Activated B cell treated with CpG ODN at 0.5 μM for 24 hours (primary cell): ENCODE measurements at regions of chr1 and their contacts with region 1.

Region 1: DNA sequence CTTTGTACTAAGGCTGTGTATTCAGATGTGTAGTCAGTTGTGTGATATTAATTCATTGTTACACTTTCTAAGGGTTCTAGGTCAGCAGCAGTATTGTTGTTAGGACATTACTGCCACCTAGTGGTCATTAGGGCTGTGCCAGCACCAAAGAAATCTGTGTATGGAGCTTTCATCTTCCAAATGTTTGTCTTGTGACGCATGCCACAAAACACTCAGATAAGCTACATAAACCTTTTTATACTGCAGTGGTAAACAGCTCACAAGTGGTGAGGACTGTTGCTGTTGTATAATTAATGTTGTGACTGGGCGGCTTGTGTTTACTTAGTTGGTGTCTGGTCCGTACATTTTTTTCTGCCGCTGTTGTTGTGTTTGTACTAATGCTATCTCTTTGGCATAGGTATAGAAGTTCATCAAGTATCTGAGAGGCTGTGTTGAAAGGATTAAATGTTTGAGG is 51.7 kb downstream of the S1PR1 start:
- DNase-seq: no peak
- ATAC-seq: peak; percentile 62
- H3K4me3 Mint-ChIP-seq: no peak overlapping the region
- H3K27ac Mint-ChIP-seq: no peak overlapping the region
- H3K4me1 Mint-ChIP-seq: peaks cover 50% of the 10 kb centered on the region
- H3K27me3 Mint-ChIP-seq: no peaks in the 10 kb centered on the region
- CTCF ChIP-seq: peak; percentile 97

Region 2: GRCh38 chr1:99808391-99809115 is 1480.0 kb before region 1 on chr1:
- CTCF ChIA-PET with region 1: no interaction called
- POLR2A ChIA-PET with region 1: no interaction called
- intact Hi-C with region 1: loop called (anchors 5 kb)
- DNase-seq: no peak
- ATAC-seq: peak; percentile 71
- H3K4me3 Mint-ChIP-seq: no peak overlapping the region
- H3K27ac Mint-ChIP-seq: no peak overlapping the region
- H3K4me1 Mint-ChIP-seq: peaks cover 4% of the 10 kb centered on the region
- H3K27me3 Mint-ChIP-seq: peaks cover 10% of the 10 kb centered on the region
- CTCF ChIP-seq: peak; percentile 52

Region 3: DNA sequence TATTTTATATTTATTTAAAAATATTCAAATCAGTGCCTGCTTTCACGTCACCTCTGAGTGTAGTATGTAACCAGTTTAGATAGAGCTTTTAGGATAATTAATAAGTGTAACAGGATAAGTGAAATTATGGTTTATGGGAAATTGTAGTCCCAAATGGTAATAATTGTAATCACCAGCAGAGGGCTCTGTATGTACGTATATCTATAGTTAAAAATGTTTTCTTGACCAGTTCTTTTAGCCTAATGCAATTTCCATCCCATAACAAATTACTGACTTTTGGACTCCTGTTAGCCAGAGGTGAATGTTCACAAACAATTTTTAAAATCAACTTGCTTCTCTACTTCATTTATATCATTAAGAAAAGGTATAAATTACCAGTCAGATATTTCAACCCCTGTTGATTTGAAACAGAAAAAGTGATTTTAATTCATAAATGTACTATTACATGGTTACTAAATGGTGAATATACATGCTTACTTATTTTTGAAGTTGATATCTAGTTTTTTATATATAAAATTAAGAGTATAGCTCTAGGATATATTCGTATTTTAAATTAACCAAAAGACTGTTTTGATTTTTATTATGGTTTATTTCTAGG is 367.3 kb before region 1 on chr1:
- CTCF ChIA-PET with region 1: interaction called, 130 read pairs
- POLR2A ChIA-PET with region 1: interaction called, 7 read pairs
- intact Hi-C with region 1: loop called (anchors 1 kb)
- DNase-seq: no peak
- ATAC-seq: no peak
- H3K4me3 Mint-ChIP-seq: no peak overlapping the region
- H3K27ac Mint-ChIP-seq: no peak overlapping the region
- H3K4me1 Mint-ChIP-seq: peaks cover 24% of the 10 kb centered on the region
- H3K27me3 Mint-ChIP-seq: no peaks in the 10 kb centered on the region
- CTCF ChIP-seq: peak; percentile 98

Region 4: GRCh38 chr1:101128211-101128727 is 160.2 kb before region 1 on chr1:
- CTCF ChIA-PET with region 1: interaction called, 112 read pairs
- POLR2A ChIA-PET with region 1: no interaction called
- intact Hi-C with region 1: loop called (anchors 2 kb)
- DNase-seq: no peak
- ATAC-seq: peak; percentile 95
- H3K4me3 Mint-ChIP-seq: peak overlapping the region; percentile 55
- H3K27ac Mint-ChIP-seq: peak overlapping the region; percentile 87
- H3K4me1 Mint-ChIP-seq: peaks cover 62% of the 10 kb centered on the region
- H3K27me3 Mint-ChIP-seq: no peaks in the 10 kb centered on the region
- CTCF ChIP-seq: no peak

Region 5: GRCh38 chr1:101247404-101248287 is 40.9 kb before region 1 on chr1:
- CTCF ChIA-PET with region 1: interaction called, 43 read pairs
- POLR2A ChIA-PET with region 1: interaction called, 28 read pairs
- intact Hi-C with region 1: no loop called
- DNase-seq: no peak
- ATAC-seq: peak; percentile 89
- H3K4me3 Mint-ChIP-seq: peak overlapping the region; percentile 44
- H3K27ac Mint-ChIP-seq: peak overlapping the region; percentile 82
- H3K4me1 Mint-ChIP-seq: peaks cover 82% of the 10 kb centered on the region
- H3K27me3 Mint-ChIP-seq: no peaks in the 10 kb centered on the region
- CTCF ChIP-seq: no peak

Region 6: DNA sequence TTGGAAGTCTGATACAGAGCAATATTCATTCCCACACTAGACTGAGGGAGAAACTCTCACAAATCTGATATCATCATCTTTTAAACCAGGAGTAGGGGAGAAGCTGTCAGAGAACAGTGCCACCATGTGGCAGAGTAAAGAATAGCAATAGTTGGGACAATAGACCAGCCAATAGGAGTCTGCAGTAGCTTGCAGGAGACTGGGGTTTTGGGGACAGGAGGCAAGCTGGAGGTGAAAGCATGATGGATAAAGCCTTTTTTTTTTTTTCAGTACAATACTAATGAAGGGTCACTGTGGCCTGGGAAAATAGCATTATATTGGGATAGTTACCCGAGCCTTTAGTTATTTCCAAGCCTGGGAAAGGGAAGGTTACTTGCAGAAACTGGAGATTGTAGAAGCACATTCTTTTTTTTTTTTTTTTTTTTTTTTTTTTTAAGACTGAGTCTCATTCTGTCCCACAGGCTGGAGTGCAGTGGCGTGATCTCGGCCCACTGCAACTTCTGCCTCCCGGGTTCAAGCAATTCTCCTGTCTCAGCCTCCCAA is 69.0 kb after region 1 on chr1:
- CTCF ChIA-PET with region 1: interaction called, 22 read pairs
- POLR2A ChIA-PET with region 1: interaction called, 6 read pairs
- intact Hi-C with region 1: loop called (anchors 1 kb)
- DNase-seq: no peak
- ATAC-seq: peak; percentile 99
- H3K4me3 Mint-ChIP-seq: no peak overlapping the region
- H3K27ac Mint-ChIP-seq: no peak overlapping the region
- H3K4me1 Mint-ChIP-seq: peaks cover 9% of the 10 kb centered on the region
- H3K27me3 Mint-ChIP-seq: no peaks in the 10 kb centered on the region
- CTCF ChIP-seq: no peak

Region 7: GRCh38 chr1:101520302-101520701 is 231.8 kb after region 1 on chr1:
- CTCF ChIA-PET with region 1: no interaction called
- POLR2A ChIA-PET with region 1: no interaction called
- intact Hi-C with region 1: no loop called
- DNase-seq: no peak
- ATAC-seq: no peak
- H3K4me3 Mint-ChIP-seq: no peak overlapping the region
- H3K27ac Mint-ChIP-seq: no peak overlapping the region
- H3K4me1 Mint-ChIP-seq: peaks cover 6% of the 10 kb centered on the region
- H3K27me3 Mint-ChIP-seq: peaks cover 11% of the 10 kb centered on the region
- CTCF ChIP-seq: no peak